ENCODE measurements at regions of chr11 and their contacts with region 1.

Region 1: DNA sequence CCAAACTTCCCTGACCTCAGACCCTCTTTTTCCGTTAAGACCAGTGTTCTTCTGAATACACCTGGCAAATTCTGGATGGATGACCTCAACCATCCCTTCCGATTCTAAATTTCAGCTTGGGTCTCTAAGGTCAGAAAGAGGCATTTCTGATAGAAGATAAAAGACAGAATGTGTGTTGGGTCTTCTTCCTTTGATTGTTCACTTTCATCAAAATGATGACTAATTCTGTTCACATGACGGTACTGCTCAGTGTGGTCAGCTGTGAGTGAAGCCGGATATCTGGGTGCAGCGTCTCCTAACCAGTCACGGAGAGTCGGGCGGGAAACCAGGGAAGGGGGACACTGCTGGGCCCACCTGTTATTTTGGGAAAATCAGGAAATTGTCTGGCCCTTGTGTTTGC is 151.6 kb upstream of the NAV2 start:
- DNase-seq: no peak
- ATAC-seq: no peak
- H3K4me3 Mint-ChIP-seq: no peak overlapping the region
- H3K27ac Mint-ChIP-seq: no peak overlapping the region
- H3K4me1 Mint-ChIP-seq: no peaks in the 10 kb centered on the region
- H3K27me3 Mint-ChIP-seq: peaks cover 16% of the 10 kb centered on the region
- CTCF ChIP-seq: no peak

Region 2: DNA sequence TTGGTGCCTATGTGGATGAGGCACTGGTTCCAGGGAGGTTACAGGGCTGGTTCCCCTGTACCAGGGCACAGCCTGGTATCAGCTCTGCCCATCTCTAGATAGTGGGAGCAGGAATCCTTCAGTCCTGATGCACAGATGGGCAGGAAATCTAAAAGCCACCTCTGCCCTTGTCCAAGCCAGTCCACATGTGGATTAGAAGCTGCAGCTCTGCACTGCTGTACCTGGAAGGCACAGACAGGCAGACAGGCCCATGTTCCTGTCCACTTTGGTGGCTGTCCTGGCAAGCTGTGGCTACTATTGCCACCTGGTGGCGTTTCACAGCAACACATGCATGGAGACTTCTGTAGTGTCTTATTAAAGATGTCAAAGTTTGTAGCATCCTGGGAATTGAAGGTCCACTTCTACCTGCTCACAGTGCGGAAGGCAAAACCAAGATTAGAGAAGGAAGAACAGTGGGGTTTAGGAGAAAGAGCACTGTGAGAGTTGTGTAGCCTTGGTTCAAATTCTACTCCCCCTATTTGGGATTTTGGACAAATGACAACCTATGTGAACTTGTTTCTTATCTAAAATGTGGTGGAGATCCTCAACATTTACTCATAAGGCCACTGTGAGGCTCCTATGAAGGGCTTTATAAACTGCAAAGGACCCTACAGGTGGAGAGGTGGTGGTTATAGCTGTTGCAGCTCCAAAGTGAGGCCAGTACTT is 181.7 kb after region 1 on chr11:
- CTCF ChIA-PET with region 1: interaction called, 25 read pairs
- POLR2A ChIA-PET with region 1: no interaction called
- intact Hi-C with region 1: loop called (anchors 1 kb)
- DNase-seq: peak; percentile 22
- ATAC-seq: peak; percentile 58
- H3K4me3 Mint-ChIP-seq: no peak overlapping the region
- H3K27ac Mint-ChIP-seq: no peak overlapping the region
- H3K4me1 Mint-ChIP-seq: no peaks in the 10 kb centered on the region
- H3K27me3 Mint-ChIP-seq: peaks cover 2% of the 10 kb centered on the region
- CTCF ChIP-seq: no peak

Region 3: DNA sequence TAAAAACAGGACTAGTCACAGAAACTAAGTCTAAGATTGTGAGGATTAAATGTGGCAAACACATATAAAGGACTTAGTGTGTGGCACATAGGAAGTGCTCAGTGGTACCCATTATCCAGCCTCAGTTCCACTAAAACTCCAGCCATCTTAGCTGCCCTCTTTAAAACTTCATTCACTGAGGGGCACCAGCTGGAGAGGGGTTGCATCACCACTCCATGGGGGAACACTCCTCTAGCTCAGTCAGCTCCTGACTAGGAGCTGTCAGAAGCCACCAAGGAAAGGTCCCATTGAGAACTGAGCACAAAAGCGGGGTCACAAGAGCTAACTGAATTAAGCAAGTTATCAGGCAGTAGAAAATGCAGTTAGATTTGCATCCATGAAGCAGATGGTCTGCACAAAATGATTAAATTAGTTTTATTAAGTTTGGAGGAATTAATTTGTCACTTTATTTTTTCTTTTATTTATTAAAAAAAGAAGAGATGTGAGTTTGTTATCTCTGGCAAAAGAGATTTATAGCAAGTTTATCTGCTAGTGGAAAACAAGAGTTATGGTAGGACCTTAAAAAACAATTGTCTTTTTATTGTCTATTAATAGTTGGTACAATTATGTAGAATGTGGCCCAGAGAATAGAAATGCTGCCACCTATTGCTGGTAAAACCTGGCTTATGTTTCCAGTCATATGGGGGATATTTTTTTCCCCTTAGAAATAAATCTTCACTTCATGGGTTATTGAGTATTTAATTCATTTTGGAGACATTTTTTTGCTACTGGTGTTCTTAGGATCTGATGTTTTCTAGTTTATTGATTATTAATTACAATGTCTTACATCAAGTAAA is 247.3 kb after region 1 on chr11:
- CTCF ChIA-PET with region 1: interaction called, 3 read pairs
- POLR2A ChIA-PET with region 1: no interaction called
- intact Hi-C with region 1: loop called (anchors 1 kb)
- DNase-seq: no peak
- ATAC-seq: no peak
- H3K4me3 Mint-ChIP-seq: no peak overlapping the region
- H3K27ac Mint-ChIP-seq: no peak overlapping the region
- H3K4me1 Mint-ChIP-seq: no peaks in the 10 kb centered on the region
- H3K27me3 Mint-ChIP-seq: no peaks in the 10 kb centered on the region
- CTCF ChIP-seq: no peak

Region 4: GRCh38 chr11:20110908-20111669 is 550.1 kb after region 1 on chr11:
- CTCF ChIA-PET with region 1: no interaction called
- POLR2A ChIA-PET with region 1: no interaction called
- intact Hi-C with region 1: loop called (anchors 5 kb)
- DNase-seq: no peak
- ATAC-seq: peak; percentile 91
- H3K4me3 Mint-ChIP-seq: no peak overlapping the region
- H3K27ac Mint-ChIP-seq: no peak overlapping the region
- H3K4me1 Mint-ChIP-seq: peaks cover 3% of the 10 kb centered on the region
- H3K27me3 Mint-ChIP-seq: peaks cover 11% of the 10 kb centered on the region
- CTCF ChIP-seq: peak; percentile 21

Region 5: DNA sequence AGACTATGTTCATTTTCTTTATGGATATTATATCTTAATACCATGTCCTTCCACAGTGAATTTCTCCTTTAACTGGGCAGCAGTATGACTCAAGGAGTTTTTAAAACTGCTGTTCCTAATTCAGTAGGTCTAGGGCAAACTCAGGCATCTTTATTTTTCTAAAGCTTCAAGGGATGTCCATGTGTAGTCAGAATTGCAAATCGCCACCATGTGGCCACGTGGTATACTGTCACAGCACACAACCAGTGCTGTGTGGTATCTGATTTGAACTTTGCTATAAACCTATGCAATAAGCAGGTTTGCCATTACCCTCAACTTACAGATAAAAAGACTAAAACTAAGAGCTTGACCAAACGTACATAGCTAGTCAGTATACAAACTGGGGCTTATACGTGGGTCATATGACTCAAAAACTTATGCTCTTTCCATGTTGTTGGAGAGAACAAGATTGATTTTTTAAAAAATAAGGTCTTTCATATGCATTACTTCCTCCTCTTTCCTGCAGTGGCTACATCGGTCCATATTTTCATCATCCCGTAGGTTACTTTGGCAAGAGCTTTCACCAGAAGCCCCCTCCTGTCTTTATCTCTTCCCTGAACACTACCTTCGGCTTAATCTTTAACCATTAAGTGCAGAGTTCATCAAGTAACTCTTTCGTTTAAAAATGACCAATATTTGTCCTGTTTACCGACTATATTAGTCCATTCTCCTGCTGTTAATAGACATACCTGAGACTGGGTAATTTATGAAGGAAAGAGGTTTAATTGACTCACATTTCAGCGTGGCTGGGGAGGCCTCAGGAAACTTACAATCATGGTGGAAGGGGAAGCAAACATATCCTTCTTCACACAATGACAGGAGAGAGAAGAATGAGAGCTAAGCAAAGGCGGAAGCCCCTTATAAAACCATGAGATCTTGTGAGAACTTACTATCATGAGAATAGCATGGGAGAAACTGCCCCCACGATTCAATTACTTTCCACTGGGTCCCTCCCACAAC is 794.5 kb after region 1 on chr11:
- CTCF ChIA-PET with region 1: no interaction called
- POLR2A ChIA-PET with region 1: no interaction called
- intact Hi-C with region 1: loop called (anchors 10 kb)
- DNase-seq: no peak
- ATAC-seq: peak; percentile 80
- H3K4me3 Mint-ChIP-seq: no peak overlapping the region
- H3K27ac Mint-ChIP-seq: no peak overlapping the region
- H3K4me1 Mint-ChIP-seq: peaks cover 8% of the 10 kb centered on the region
- H3K27me3 Mint-ChIP-seq: peaks cover 7% of the 10 kb centered on the region
- CTCF ChIP-seq: no peak

Measured in activated B cell treated with CpG ODN at 0.5 μM for 24 hours (primary cell).